Ovary (tissue), 10 donors: ENCODE measurements at regions of chr4 and their contacts with region 1.

Region 1: DNA sequence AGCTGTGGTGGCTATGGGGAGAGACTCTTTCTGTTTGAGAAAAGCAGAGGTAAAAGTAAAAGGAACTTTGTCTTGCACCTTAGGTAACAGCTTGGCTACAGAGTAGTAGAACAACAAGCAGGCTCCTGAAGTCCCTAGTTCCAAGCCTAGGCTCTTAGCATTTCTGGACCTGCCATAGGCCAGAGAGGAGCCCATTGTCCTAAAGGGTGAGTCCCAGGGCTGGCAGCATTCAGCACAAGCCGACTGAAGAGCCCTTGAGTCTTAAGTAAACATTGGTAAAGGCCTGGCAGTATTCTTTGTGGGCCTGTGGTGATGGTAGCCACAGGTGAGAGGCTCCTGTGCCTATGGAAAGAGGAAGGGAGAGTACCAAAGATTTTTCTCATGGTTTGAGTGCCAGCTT is 38.2 kb downstream of the CSN3 start:
- DNase-seq: no peak
- H3K4me3 ChIP-seq: no peak overlapping the region
- H3K27ac ChIP-seq: no peak overlapping the region
- H3K4me1 ChIP-seq: no peaks in the 10 kb centered on the region
- H3K27me3 ChIP-seq: no peaks in the 10 kb centered on the region
- CTCF ChIP-seq: no peak
- EP300 ChIP-seq: no peak
- POLR2A ChIP-seq: no peak

Region 2: DNA sequence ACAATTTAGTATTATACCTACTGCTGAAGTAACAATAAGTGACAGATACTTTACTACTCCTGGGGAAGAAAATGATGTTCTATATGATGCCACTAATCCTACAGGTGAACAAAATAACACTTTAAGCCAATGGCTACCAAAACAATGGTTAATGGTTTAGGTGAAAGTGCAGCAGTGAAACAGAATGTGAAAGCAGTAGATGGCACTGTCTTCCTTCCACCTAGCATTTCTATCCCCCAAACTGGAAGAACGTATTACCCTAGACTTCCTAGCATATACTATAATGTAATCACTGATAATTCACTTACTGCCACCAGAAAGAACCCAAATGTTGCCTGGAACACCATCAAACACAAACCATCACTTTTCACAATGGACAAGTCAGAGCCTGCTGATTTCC is 35.4 kb after region 1 on chr4:
- intact Hi-C with region 1: loop called in 1 of 4 experiments (anchors 1 kb)
- DNase-seq: no peak
- H3K4me3 ChIP-seq: no peak overlapping the region
- H3K27ac ChIP-seq: no peak overlapping the region
- H3K4me1 ChIP-seq: no peaks in the 10 kb centered on the region
- H3K27me3 ChIP-seq: no peaks in the 10 kb centered on the region
- CTCF ChIP-seq: no peak
- EP300 ChIP-seq: no peak
- POLR2A ChIP-seq: no peak